ENCODE measurements at regions of chr5 and their contacts with region 1.

Region 1: DNA sequence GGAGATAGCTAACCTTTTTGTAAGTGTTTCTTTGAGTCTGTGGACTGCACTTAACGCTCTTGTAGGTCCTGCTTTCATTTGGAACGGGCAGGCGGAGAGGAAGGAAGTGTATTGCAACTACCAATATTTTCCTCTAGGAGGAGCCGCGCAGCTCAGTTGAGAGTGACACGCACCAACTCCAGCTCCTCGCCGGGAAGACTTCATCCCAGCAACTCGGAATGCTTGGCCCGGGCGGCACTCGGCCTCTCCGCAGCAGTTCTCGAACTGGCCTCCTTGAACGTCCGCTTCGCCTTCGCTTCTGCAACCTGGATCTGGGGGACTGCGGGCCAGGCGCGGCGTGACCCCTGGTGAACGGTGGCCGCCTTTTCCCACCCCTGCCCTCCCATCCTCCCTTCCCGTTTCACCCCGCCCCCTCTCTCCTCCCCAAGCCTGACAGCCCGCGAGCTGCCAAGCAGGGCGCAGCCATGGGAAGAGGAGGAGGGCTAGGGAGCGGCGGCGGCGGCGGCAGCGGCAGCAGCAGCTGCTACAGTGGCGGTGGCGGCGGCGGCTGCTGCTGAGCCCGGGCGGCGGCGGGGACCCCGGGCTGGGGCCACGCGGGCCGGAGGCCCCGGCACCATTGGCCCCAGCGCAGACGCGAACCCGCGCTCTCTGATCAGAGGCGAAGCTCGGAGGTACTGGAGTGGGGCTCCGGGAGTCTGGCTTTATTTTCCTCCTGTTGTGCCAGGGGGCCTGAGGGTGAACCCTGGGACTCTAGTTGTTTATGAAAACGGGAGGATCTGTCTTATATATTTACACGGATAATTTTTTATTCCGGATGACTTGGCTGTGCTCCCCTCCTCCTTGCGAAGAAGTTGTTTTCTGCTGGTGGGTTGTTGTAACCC is at the start of gene GHR:
- DNase-seq: peak; percentile 84 to 95
- H3K4me3 ChIP-seq: peak within 1 kb of the TSS; percentile 64
- CTCF ChIP-seq: peak in 1 of 3 donors; percentile 76
- POLR2A ChIP-seq: no peak
- total RNA-seq, gene GHR: 10.5 to 23.1 (median 14.2) TPM

Region 2: DNA sequence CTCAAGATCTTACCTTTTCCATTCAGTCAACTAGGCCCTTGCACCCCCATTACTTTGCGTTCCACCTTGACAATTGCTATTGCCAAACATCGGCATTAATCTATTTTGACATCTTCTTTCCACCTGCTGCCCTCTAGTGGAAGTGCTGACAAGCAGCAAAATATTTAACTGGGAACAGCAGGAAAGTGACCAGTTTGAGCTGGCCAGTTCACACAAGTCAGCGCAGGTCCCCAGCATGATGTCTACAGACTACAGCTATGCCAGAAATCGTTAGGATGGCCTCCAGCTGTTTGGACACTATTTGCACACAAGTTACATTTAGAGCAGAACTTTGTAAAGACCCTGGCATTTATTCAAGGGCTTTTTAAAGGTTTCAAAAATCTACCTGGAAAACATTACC is 159.8 kb after region 1 on chr5:
- intact Hi-C with region 1: loop called (anchors 10 kb)
- DNase-seq: peak in 1 of 2 donors; percentile 49
- H3K4me3 ChIP-seq: no peak overlapping the region
- CTCF ChIP-seq: peak in 1 of 3 donors; percentile 51
- POLR2A ChIP-seq: no peak

Measured in lower leg skin (tissue), 4 donors.